Activated B cell treated with CpG ODN at 0.5 μM for 24 hours (primary cell): ENCODE measurements at regions of chr3 and their contacts with region 1.

Region 1: DNA sequence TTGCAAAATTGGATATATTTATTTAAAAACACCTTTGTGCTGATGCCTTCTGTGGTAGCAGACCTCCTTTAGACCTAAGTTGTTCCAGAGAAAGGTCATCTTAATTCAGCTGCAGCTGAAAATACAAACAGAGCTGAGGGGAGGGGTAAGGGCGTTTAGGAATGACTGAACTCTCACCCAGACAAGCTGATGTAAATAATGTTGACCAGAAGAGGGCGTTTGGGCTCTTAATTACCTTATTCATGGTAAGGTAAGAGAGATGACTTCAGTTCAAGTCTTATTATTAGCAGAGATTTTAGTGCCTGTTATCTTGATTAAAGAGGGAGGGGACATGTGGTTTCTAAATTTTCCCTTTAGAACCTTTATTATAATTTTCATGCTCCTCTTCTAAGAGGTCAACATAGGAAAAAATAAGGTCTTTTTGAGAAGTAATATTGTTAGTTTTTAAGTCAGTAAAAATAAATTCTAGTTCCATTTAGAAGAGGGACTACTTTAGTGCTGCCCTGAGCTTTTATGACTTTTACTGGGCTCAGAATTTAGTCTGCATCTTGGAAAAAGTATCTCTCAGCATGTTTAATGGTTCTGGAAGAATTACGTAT is 46.3 kb downstream of the GPR171 start:
- DNase-seq: no peak
- ATAC-seq: peak; percentile 87
- H3K4me3 Mint-ChIP-seq: no peak overlapping the region
- H3K27ac Mint-ChIP-seq: no peak overlapping the region
- H3K4me1 Mint-ChIP-seq: no peaks in the 10 kb centered on the region
- H3K27me3 Mint-ChIP-seq: no peaks in the 10 kb centered on the region
- CTCF ChIP-seq: no peak

Region 2: DNA sequence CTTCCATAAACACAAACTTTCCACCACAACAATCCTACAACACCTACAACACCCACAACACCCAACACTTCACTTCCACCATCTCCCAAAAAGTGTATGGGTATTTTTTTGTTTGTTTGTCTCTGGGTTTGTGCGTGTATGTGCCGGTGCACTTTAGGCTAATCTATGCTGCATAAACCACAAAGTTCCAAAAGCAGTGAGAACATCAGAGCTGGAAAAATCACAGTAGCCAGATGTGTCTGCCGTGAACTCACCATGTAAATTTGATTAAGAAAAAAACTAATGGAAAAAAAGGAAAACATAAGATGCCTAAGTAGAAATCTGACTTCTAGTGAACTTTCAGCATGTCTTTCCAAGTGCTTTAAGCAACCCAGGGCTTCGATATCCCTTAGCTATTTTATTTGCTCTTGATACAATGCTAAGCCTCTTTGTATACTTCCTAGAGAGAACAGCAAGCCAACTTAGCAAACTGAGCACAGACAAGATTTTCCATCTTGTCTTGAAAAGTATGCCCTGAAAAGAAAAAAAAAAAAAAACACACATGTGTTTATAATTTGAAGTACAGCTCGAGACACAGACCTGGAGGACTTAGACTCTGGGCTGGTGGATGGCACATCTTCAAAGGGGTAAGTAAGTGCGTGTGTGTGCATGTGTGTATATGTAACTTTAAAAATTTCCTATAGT is 1590.3 kb before region 1 on chr3:
- CTCF ChIA-PET with region 1: no interaction called
- POLR2A ChIA-PET with region 1: no interaction called
- intact Hi-C with region 1: no loop called
- DNase-seq: no peak
- ATAC-seq: no peak
- H3K4me3 Mint-ChIP-seq: no peak overlapping the region
- H3K27ac Mint-ChIP-seq: no peak overlapping the region
- H3K4me1 Mint-ChIP-seq: no peaks in the 10 kb centered on the region
- H3K27me3 Mint-ChIP-seq: peaks cover 2% of the 10 kb centered on the region
- CTCF ChIP-seq: no peak

Region 3: DNA sequence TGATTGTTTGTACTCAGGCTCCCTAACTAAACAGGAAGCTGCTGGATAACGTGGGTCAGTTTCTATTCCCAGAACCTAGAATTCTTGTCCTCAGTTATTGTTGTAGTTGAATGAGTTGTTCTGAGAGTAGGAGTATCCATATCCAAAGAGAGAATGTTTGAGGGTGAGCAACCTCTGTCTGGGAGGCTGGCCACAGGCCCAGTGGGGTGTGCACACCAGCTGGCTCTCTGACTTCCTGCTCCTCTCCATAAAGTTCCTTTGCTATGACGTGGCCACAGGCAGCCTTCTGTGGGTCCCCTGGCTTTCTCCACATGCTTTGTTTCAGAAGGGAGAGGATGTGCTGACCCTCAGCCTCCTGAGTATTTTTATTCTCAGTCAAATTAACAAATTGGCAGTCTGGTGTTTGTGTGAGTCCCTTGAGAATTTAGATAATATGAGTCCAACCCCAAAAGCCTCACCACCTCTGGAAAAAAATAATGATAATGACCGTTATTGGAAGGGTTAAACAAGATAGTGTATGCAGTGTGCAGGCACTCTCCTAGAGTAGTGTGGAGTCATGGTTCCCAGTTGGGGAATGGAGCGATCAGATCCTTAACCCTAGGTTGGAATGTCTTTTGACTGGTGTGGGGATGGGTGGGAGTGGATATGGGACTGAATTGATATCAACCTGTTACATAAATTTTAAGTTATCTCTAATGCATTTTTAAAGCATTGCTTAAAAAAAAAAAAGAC is 118.8 kb before region 1 on chr3:
- CTCF ChIA-PET with region 1: no interaction called
- POLR2A ChIA-PET with region 1: no interaction called
- intact Hi-C with region 1: no loop called
- DNase-seq: no peak
- ATAC-seq: no peak
- H3K4me3 Mint-ChIP-seq: no peak overlapping the region
- H3K27ac Mint-ChIP-seq: no peak overlapping the region
- H3K4me1 Mint-ChIP-seq: no peaks in the 10 kb centered on the region
- H3K27me3 Mint-ChIP-seq: no peaks in the 10 kb centered on the region
- CTCF ChIP-seq: no peak

Region 4: GRCh38 chr3:151838583-151839312 is 682.0 kb after region 1 on chr3:
- CTCF ChIA-PET with region 1: interaction called, 5 read pairs
- POLR2A ChIA-PET with region 1: no interaction called
- intact Hi-C with region 1: loop called (anchors 2 kb)
- DNase-seq: no peak
- ATAC-seq: peak; percentile 68
- H3K4me3 Mint-ChIP-seq: no peak overlapping the region
- H3K27ac Mint-ChIP-seq: no peak overlapping the region
- H3K4me1 Mint-ChIP-seq: no peaks in the 10 kb centered on the region
- H3K27me3 Mint-ChIP-seq: peaks cover 3% of the 10 kb centered on the region
- CTCF ChIP-seq: peak; percentile 55

Region 5: GRCh38 chr3:151918253-151919029 is 761.7 kb after region 1 on chr3:
- CTCF ChIA-PET with region 1: no interaction called
- POLR2A ChIA-PET with region 1: no interaction called
- intact Hi-C with region 1: loop called (anchors 1 kb)
- DNase-seq: no peak
- ATAC-seq: no peak
- H3K4me3 Mint-ChIP-seq: no peak overlapping the region
- H3K27ac Mint-ChIP-seq: no peak overlapping the region
- H3K4me1 Mint-ChIP-seq: no peaks in the 10 kb centered on the region
- H3K27me3 Mint-ChIP-seq: no peaks in the 10 kb centered on the region
- CTCF ChIP-seq: peak; percentile 18